ENCODE measurements at regions of chrX and their contacts with region 1.

Region 1: GRCh38 chrX:38803586-38804431 is 2.5 kb downstream of the MID1IP1 start:
- DNase-seq: peak; percentile 85
- H3K4me3 Mint-ChIP-seq: peak overlapping the region; percentile 96
- H3K27ac Mint-ChIP-seq: peak overlapping the region; percentile 94
- H3K4me1 Mint-ChIP-seq: peaks cover 7% of the 10 kb centered on the region
- H3K27me3 Mint-ChIP-seq: no peaks in the 10 kb centered on the region

Region 2: GRCh38 chrX:38817004-38817703 is 13.3 kb after region 1 on chrX:
- CTCF ChIA-PET with region 1: no interaction called
- POLR2A ChIA-PET with region 1: interaction called, 10 read pairs
- intact Hi-C with region 1: loop called (anchors 1 kb)
- DNase-seq: peak; percentile 23
- H3K4me3 Mint-ChIP-seq: no peak overlapping the region
- H3K27ac Mint-ChIP-seq: no peak overlapping the region
- H3K4me1 Mint-ChIP-seq: peaks cover 8% of the 10 kb centered on the region
- H3K27me3 Mint-ChIP-seq: no peaks in the 10 kb centered on the region

Region 3: DNA sequence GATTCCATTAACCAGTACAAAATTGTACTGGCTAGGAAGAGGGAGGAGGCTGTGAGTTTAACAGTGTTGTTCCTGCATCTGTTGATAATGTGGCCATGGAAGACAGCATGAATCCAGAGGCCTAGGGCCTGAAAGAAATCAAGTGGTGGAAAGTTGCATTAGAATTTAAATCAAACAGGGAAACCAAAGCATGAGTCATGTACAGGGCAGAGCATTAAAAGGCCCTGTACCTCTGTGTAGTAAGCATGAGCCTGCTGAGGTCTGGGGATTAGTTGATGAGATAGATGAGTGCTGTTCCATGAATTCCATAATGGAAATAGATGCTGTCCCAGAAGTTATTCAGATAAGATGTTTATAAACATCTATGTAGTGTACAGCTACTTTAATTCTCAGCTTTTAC is 55.8 kb after region 1 on chrX:
- CTCF ChIA-PET with region 1: no interaction called
- POLR2A ChIA-PET with region 1: no interaction called
- intact Hi-C with region 1: loop called (anchors 5 kb)
- DNase-seq: no peak
- H3K4me3 Mint-ChIP-seq: no peak overlapping the region
- H3K27ac Mint-ChIP-seq: no peak overlapping the region
- H3K4me1 Mint-ChIP-seq: peaks cover 4% of the 10 kb centered on the region
- H3K27me3 Mint-ChIP-seq: no peaks in the 10 kb centered on the region

Region 4: GRCh38 chrX:38985375-38985774 is 181.6 kb after region 1 on chrX:
- CTCF ChIA-PET with region 1: interaction called, 3 read pairs
- POLR2A ChIA-PET with region 1: no interaction called
- intact Hi-C with region 1: loop called (anchors 1 kb)
- DNase-seq: no peak
- H3K4me3 Mint-ChIP-seq: no peak overlapping the region
- H3K27ac Mint-ChIP-seq: no peak overlapping the region
- H3K4me1 Mint-ChIP-seq: no peaks in the 10 kb centered on the region
- H3K27me3 Mint-ChIP-seq: no peaks in the 10 kb centered on the region

Region 5: GRCh38 chrX:39174772-39175417 is 371.1 kb after region 1 on chrX:
- CTCF ChIA-PET with region 1: no interaction called
- POLR2A ChIA-PET with region 1: no interaction called
- intact Hi-C with region 1: no loop called
- DNase-seq: peak; percentile 64
- H3K4me3 Mint-ChIP-seq: peak overlapping the region; percentile 29
- H3K27ac Mint-ChIP-seq: peak overlapping the region; percentile 79
- H3K4me1 Mint-ChIP-seq: peaks cover 33% of the 10 kb centered on the region
- H3K27me3 Mint-ChIP-seq: no peaks in the 10 kb centered on the region

Region 6: DNA sequence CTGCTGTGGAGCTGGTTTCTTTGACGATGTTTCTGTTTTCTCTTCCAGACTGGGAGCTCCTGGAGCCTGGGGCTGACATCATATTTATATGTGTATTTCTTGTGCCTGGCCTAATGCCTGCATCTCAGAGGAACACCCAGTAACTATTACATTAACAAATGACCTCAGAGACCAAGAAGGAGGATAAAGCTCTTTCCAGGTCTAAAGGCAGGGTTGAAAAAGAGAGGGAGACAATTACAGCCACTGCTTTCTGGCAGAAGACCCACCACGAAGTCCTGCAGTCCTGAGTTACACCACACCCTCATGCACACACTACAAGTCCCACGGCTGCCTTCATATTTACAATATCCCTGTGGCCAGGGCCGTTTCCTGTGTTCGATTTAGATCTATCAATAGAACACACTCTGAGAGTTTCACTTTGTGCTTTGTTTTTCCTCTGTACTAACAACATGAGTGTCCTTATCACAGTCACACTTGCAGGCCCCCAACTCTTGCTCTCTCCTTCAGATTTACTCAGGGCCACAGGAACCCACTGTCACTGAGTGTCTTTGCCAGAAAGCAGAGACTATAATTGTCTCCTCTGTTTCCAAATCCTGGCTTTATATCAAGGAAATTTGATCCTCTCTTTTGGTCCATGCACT is 533.0 kb after region 1 on chrX:
- CTCF ChIA-PET with region 1: no interaction called
- POLR2A ChIA-PET with region 1: no interaction called
- intact Hi-C with region 1: loop called (anchors 10 kb)
- DNase-seq: peak; percentile 57
- H3K4me3 Mint-ChIP-seq: peak overlapping the region; percentile 41
- H3K27ac Mint-ChIP-seq: peak overlapping the region; percentile 88
- H3K4me1 Mint-ChIP-seq: peaks cover 45% of the 10 kb centered on the region
- H3K27me3 Mint-ChIP-seq: no peaks in the 10 kb centered on the region

Region 7: DNA sequence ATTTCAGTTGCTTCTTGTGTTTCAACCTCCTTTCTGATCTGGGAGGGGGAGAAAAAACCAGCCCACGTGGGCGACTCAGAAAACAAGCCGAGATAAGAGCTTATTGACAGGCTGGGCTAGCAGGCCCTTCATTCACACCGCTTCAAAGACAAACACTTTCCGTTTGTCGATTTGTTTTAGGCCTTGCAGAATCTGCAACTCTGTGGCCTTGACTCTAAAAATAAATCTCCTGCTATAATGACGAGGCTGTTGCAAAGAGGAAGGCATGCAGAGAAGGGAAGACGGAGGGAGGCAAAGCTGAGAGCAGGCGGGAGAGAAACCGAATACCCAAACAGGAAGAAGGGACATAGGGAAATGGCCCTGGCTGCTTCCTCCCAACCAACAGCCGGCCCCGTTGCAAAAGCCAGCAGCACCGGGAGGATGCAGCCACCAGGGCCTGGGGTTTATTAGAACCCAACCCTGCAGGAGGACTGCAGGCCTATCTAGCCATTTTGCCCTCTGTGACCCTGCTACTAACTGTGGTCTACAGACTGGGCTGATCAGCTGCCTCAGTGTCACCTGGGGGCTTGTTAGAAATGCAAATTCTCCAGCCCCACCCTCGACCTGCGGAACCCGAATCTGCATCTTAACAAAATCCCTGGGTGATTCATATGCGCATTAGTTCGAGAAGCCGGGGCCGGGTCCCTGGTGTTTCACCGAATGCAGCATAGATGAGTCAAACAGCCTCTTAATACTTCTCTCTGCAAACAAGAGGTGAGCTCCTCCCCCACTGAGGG is 968.4 kb after region 1 on chrX:
- CTCF ChIA-PET with region 1: no interaction called
- POLR2A ChIA-PET with region 1: interaction called, 3 read pairs
- intact Hi-C with region 1: loop called (anchors 5 kb)
- DNase-seq: peak; percentile 86
- H3K4me3 Mint-ChIP-seq: peak overlapping the region; percentile 55
- H3K27ac Mint-ChIP-seq: peak overlapping the region; percentile 98
- H3K4me1 Mint-ChIP-seq: peaks cover 48% of the 10 kb centered on the region
- H3K27me3 Mint-ChIP-seq: no peaks in the 10 kb centered on the region

Measured in activated CD4-positive, alpha-beta memory T cell treated with anti-CD3 and anti-CD28 coated beads for 36 hours (primary cell).